Cardiac septum (tissue), 1 donor: ENCODE measurements at regions of chr5 and their contacts with region 1.

Region 1: DNA sequence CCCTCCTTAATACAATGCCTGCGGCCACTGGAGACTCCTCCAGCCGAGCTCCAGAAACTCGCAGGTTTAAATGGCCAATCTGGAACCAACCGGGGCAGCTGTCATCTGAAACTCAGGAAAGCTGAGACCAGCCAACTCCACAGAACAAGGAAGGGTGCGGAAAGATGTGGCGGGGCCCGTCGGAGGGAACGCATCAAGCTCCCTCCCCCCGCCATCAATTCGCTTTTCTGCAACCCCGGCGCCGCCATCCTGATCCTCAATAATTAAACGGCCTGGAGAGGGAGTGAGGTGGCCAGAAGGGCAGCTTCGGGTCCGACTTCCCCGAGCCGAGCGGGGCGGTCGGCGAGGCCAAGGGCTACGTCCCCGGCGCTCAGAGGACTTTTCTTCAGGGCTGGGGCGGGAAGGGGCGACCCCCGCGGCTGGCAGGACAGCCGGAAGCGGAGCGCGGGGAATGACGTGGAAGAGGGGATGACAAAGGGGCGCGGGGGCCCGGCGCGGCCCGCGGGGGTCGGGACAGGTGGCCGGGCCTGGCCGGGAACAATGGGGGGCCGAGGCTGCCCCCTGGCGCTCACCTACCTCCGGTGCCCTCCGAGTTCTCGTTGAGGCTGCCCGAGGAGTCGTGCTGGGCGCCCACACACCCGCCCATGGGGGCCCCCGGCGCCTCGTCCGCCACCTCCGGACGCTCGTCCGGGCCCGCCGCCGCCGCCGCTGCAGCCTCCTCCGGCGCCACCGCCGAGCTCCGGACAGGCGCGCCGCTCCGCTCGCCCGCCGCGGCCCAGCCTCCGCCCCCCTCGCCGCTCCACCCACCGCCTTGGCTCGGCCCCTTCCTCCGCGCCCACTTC is at the start of gene UBTD2:
- DNase-seq: peak; percentile 94
- total RNA-seq, gene UBTD2: 11.8 TPM

Region 2: GRCh38 chr5:171913987-171914273 is 369.3 kb before region 1 on chr5:
- intact Hi-C with region 1: loop called (anchors 10 kb)
- DNase-seq: no peak

Region 3: DNA sequence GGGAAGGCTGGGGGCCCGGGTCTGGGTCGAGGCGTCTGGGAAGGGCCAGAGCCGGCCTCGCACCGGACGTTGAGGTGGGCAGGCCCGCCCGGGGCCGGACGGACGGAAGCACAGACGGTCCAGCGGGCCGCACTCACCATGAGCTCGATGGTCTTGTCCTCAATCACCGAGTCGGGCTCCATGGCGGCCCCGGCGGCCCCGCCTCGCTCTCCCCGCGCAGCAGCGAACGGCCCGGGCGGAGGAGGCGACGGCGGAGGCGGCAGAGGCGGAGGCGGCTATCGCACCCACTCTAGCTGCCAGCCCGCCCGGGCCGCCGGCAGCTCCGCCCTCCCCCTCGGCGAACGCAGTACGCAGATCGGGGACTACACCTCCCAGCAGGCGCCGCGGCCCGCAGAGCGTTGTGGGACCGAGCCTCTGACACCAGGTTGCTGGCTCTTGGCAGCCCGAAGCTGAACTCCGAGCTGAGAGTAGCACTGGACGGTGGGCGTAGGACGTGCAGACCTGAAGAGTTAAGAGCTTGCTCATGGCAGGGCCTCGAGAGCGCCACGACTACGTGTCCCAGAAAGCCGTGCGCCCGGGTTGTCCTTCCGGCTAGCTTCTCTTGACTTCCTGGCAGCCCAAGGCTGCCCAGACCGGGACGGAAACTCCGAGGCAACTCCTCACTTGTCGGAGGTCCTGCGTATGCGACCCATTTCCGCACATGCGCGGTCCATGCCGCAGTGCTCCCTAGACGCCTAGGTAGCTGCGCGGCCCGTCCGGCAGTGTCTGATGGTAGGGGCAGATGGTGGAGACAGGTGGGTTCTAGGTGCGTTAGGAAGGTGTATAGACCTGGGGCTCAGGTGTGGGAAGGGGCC is 276.7 kb before region 1 on chr5 and contains the start of gene FBXW11:
- intact Hi-C with region 1: loop called (anchors 5 kb)
- DNase-seq: peak; percentile 98
- total RNA-seq, gene FBXW11: 94.4 TPM

Region 4: GRCh38 chr5:172106511-172107356 is 176.5 kb before region 1 on chr5:
- intact Hi-C with region 1: loop called (anchors 2 kb)
- DNase-seq: peak; percentile 87

Region 5: GRCh38 chr5:172350212-172351181 is 67.3 kb after region 1 on chr5:
- intact Hi-C with region 1: no loop called
- DNase-seq: no peak

Region 6: DNA sequence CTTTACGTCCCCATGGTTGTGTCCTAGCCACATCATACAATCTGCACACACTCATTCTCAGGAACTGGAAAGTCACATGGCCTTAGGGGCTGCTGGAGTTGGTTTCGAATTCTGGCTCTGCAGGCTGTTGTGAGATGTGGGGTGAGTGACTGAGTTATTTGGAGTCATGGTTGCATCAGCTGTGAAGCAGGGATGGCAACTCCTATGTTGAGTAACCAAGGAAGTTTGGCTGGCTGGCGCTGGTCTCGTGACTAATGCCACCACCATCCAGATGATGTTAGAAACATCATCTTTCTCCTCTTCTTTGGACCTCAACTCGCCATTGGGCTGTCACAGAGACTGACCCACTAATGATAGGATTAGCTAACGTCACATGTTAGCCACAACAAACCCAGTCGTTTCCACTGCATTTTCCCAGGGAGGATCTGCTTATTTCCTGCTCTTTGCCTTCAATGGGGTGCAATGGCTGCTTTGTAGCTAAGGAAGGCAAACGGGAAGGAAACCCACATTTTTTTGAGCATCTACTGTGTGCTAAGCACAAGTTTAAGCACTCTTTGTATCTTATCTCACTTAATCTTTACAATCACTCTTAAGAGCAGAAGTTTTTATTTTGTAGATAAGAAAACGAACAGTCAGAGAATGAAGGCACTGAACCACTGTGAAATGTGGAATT is 78.5 kb after region 1 on chr5:
- intact Hi-C with region 1: no loop called
- DNase-seq: no peak

Region 7: GRCh38 chr5:172454358-172455086 is 171.3 kb after region 1 on chr5 and contains the start of gene SH3PXD2B:
- intact Hi-C with region 1: loop called (anchors 5 kb)
- DNase-seq: peak; percentile 79
- total RNA-seq, gene SH3PXD2B: 5.1 TPM